ENCODE measurements at regions of chr7 and their contacts with region 1.

Region 1: DNA sequence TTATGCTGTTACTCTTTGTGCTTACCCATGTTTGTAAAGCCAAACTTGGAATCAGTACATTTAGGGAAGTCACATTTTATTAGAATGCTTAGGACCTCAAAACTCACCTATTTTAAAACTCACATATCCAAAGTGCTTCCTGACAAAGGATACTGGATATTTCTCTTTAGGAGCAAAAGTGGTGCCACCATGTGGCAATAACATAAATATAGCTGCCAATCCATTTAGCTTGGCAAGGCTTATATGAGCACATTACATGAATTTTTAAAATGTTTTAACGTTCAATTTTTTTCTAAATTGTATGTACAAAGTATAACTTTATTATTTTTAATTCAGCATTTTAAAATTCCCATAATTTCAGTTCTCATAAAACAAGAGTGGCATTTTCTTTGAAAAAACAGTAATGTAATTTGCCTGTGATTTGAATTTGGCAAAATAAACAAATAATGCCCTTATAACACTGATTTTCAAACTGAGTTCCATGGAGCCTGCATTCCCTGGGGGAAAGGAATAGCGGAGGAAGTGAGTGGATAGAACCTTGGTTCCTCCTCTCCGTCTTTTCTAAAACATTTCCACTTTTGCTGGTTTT is 75.4 kb downstream of the HDAC9 start:
- DNase-seq: peak; percentile 22
- H3K4me3 ChIP-seq: no peak overlapping the region
- H3K27ac ChIP-seq: no peak overlapping the region
- H3K4me1 ChIP-seq: peaks cover 7% of the 10 kb centered on the region
- H3K27me3 ChIP-seq: no peaks in the 10 kb centered on the region
- CTCF ChIP-seq: peak; percentile 41 to 45

Region 2: GRCh38 chr7:18357691-18358090 is 213.3 kb before region 1 on chr7:
- CTCF ChIA-PET with region 1: interaction called, 6 read pairs
- dilution Hi-C with region 1: loop called (anchors 25 kb)
- in situ Hi-C with region 1: loop called in 1 of 2 experiments (anchors 10 kb)
- intact Hi-C with region 1: loop called (anchors 1 kb)
- DNase-seq: peak; percentile 48
- H3K4me3 ChIP-seq: no peak overlapping the region
- H3K27ac ChIP-seq: no peak overlapping the region
- H3K4me1 ChIP-seq: no peaks in the 10 kb centered on the region
- H3K27me3 ChIP-seq: no peaks in the 10 kb centered on the region
- CTCF ChIP-seq: peak; percentile 37 to 45

Measured in mammary epithelial cell (primary cell).